Endothelial cell of umbilical vein (primary cell): ENCODE measurements at regions of chr6 and their contacts with region 1.

Region 1: GRCh38 chr6:6547110-6547879 is 41.2 kb upstream of the LY86 start:
- DNase-seq: peak; percentile 84
- H3K4me3 ChIP-seq: peak overlapping the region in 2 of 3 experiments; percentile 10 to 21
- H3K27ac ChIP-seq: no peak overlapping the region
- H3K4me1 ChIP-seq: no peaks in the 10 kb centered on the region
- H3K27me3 ChIP-seq: peaks cover 11 to 19% of the 10 kb centered on the region in 2 experiments
- CTCF ChIP-seq: peak; percentile 87
- POLR2A ChIP-seq: no peak

Region 2: DNA sequence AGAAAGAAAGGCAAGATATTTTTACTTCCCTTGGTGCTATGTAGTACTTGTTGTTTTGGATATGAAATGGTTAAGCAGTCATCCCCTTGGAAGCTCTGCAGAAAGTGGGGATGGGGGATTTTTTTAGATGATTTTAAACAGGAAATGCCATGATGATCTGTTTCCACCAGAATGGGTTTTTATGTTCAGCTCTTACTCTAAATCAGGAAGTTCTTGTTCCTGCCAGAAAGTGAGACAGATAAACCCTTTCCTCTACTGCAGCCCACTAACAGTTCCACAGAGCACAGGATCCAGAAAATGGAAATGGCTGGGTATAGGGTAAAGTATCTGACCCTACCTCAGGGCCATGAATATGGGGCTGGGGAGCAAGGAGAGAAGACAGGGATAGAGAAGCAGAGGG is 1494.3 kb before region 1 on chr6:
- CTCF ChIA-PET with region 1: interaction called, 7 read pairs
- POLR2A ChIA-PET with region 1: no interaction called
- dilution Hi-C with region 1: no loop called
- intact Hi-C with region 1: loop called (anchors 10 kb)
- DNase-seq: peak; percentile 71
- H3K4me3 ChIP-seq: no peak overlapping the region
- H3K27ac ChIP-seq: peak overlapping the region; percentile 45
- H3K4me1 ChIP-seq: peaks cover 27% of the 10 kb centered on the region
- H3K27me3 ChIP-seq: no peaks in the 10 kb centered on the region
- CTCF ChIP-seq: no peak
- POLR2A ChIP-seq: no peak

Region 3: DNA sequence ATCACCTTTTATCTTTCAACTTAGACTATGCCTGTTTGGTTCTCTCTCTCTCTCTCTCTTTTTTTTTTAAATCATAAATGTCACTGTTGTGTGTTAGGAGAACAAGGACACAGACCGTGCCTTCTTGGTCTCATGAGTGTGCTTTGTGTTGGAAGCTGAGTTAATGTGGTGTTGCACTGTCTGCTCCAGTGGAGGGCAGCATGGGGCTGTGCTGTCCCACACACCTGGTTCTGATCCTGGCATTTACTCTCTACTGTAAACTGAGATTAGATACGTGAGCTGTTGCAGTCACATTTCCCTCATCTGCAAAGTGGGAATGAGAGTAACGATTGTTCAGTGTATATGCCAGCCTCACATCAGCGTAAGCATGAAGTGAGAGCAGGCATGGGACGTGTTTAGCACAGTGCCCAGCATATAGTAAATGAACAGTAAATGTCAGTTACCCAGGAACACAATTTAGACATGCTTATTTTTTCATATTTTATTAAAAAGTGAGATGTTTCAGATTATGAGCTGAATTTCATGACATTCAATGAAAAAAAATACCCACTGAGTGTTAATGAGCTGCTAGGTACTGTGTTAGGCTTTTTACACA is 1124.9 kb before region 1 on chr6:
- CTCF ChIA-PET with region 1: interaction called, 74 read pairs
- POLR2A ChIA-PET with region 1: no interaction called
- dilution Hi-C with region 1: no loop called
- intact Hi-C with region 1: loop called (anchors 1 kb)
- DNase-seq: peak; percentile 40
- H3K4me3 ChIP-seq: no peak overlapping the region
- H3K27ac ChIP-seq: no peak overlapping the region
- H3K4me1 ChIP-seq: no peaks in the 10 kb centered on the region
- H3K27me3 ChIP-seq: no peaks in the 10 kb centered on the region
- CTCF ChIP-seq: peak; percentile 40 to 55
- POLR2A ChIP-seq: no peak

Region 4: GRCh38 chr6:5950361-5950785 is 596.9 kb before region 1 on chr6:
- CTCF ChIA-PET with region 1: interaction called, 5 read pairs
- POLR2A ChIA-PET with region 1: no interaction called
- dilution Hi-C with region 1: no loop called
- intact Hi-C with region 1: loop called (anchors 1 kb)
- DNase-seq: peak; percentile 44
- H3K4me3 ChIP-seq: no peak overlapping the region
- H3K27ac ChIP-seq: no peak overlapping the region
- H3K4me1 ChIP-seq: no peaks in the 10 kb centered on the region
- H3K27me3 ChIP-seq: no peaks in the 10 kb centered on the region
- CTCF ChIP-seq: peak; percentile 52 to 63
- POLR2A ChIP-seq: no peak

Region 5: GRCh38 chr6:6057424-6058053 is 489.8 kb before region 1 on chr6:
- CTCF ChIA-PET with region 1: interaction called, 95 read pairs
- POLR2A ChIA-PET with region 1: no interaction called
- dilution Hi-C with region 1: no loop called
- intact Hi-C with region 1: loop called (anchors 1 kb)
- DNase-seq: peak; percentile 57
- H3K4me3 ChIP-seq: no peak overlapping the region
- H3K27ac ChIP-seq: no peak overlapping the region
- H3K4me1 ChIP-seq: no peaks in the 10 kb centered on the region
- H3K27me3 ChIP-seq: no peaks in the 10 kb centered on the region
- CTCF ChIP-seq: peak; percentile 34 to 50
- POLR2A ChIP-seq: no peak

Region 6: GRCh38 chr6:6529275-6529674 is 18.0 kb before region 1 on chr6:
- CTCF ChIA-PET with region 1: interaction called, 13 read pairs
- POLR2A ChIA-PET with region 1: no interaction called
- dilution Hi-C with region 1: no loop called
- intact Hi-C with region 1: no loop called
- DNase-seq: no peak
- H3K4me3 ChIP-seq: no peak overlapping the region
- H3K27ac ChIP-seq: no peak overlapping the region
- H3K4me1 ChIP-seq: no peaks in the 10 kb centered on the region
- H3K27me3 ChIP-seq: no peaks in the 10 kb centered on the region
- CTCF ChIP-seq: no peak
- POLR2A ChIP-seq: no peak

Region 7: GRCh38 chr6:6758915-6759654 is 211.8 kb after region 1 on chr6:
- CTCF ChIA-PET with region 1: no interaction called
- POLR2A ChIA-PET with region 1: no interaction called
- dilution Hi-C with region 1: no loop called
- intact Hi-C with region 1: no loop called
- DNase-seq: peak; percentile 64
- H3K4me3 ChIP-seq: no peak overlapping the region
- H3K27ac ChIP-seq: no peak overlapping the region
- H3K4me1 ChIP-seq: no peaks in the 10 kb centered on the region
- H3K27me3 ChIP-seq: peaks cover 0 to 4% of the 10 kb centered on the region in 2 experiments
- CTCF ChIP-seq: peak; percentile 40 to 45
- POLR2A ChIP-seq: no peak